ENCODE measurements at regions of chr5 and their contacts with region 1.

Region 1: GRCh38 chr5:158074992-158075769 is 216.2 kb upstream of the CLINT1 start:
- DNase-seq: peak; percentile 19
- H3K4me3 ChIP-seq: peak overlapping the region; percentile 2; the same call in 1 of the 2 replicates
- CTCF ChIP-seq: peak; percentile 79

Region 2: GRCh38 chr5:158054223-158055110 is 20.7 kb before region 1 on chr5:
- CTCF ChIA-PET with region 1: interaction called, 72 read pairs
- POLR2A ChIA-PET with region 1: no interaction called
- DNase-seq: no peak
- H3K4me3 ChIP-seq: no peak overlapping the region
- CTCF ChIP-seq: no peak

Region 3: GRCh38 chr5:158064334-158065123 is 10.7 kb before region 1 on chr5:
- CTCF ChIA-PET with region 1: interaction called, 72 read pairs
- POLR2A ChIA-PET with region 1: no interaction called
- DNase-seq: no peak
- H3K4me3 ChIP-seq: no peak overlapping the region
- CTCF ChIP-seq: no peak

Region 4: GRCh38 chr5:158100373-158100888 is 25.2 kb after region 1 on chr5:
- CTCF ChIA-PET with region 1: interaction called, 11 read pairs
- POLR2A ChIA-PET with region 1: no interaction called
- DNase-seq: no peak
- H3K4me3 ChIP-seq: no peak overlapping the region
- CTCF ChIP-seq: no peak

Region 5: DNA sequence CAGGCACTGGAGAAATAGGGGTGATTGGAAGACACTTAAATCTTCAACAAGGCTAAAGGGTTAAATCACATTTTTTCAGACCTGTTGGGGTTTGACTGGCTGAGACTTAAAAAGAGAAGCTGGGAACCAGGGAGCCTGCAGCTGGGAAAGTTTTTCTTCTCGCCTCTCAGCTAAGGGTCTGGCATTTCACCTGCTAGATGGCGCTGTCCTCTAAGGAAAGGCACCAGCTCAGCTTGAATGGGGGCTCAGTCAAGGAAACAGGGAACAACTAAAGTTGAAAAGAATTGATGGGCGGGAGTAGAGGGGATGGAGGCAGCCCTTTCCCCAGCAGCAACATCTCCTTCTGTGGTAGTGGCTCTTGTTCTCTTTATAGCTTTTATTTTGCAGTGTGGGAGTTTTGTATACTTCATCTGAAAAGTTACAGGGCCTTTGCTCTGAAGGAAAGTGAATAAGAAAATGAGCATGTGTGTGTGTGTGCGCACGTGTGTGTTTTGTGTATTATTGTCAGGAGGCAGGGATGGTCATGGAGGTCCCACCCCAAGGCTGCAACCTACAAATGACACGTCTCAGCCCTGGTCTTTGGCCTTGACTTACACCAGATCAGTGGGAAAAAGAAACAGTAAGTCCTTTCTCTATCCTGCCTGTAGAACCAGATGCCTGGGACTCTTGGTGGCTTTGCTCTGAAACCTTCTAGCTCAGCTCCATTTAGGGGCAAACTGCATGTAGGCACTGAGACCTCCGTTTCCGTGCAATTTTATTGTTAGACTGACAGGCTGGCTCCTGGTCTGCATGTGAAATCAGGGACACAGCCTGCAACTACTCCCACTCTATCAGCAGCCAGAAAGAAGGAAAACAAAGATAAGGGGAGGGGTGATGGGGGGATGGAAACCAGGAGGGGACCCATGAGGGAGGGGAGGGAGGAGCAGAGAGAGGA is 100.0 kb after region 1 on chr5:
- CTCF ChIA-PET with region 1: interaction called, 15 read pairs
- POLR2A ChIA-PET with region 1: no interaction called
- DNase-seq: peak; percentile 28
- H3K4me3 ChIP-seq: no peak overlapping the region
- CTCF ChIP-seq: peak; percentile 81

Region 6: DNA sequence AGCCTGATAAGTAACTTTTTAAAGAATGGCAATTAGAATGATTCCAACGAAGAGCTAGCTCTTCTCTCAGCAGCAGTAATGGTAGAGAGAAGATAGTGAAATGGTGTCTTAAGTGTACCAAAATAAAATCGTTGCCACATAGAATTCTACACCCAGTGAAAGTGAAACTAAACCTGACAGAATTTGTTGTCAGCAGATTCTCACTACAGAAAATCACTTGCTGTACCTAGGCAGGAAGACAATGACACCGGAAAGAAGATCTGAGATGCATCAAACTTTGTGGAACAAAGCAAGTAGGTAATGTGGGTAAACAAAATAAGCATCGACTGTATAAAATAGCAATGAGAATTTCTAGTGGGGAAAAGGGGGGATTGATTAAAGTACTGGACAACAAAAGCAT is 1045.3 kb after region 1 on chr5:
- CTCF ChIA-PET with region 1: interaction called, 11 read pairs
- POLR2A ChIA-PET with region 1: no interaction called
- DNase-seq: no peak
- H3K4me3 ChIP-seq: no peak overlapping the region
- CTCF ChIP-seq: no peak

Region 7: GRCh38 chr5:159133041-159133741 is 1058.0 kb after region 1 on chr5:
- CTCF ChIA-PET with region 1: interaction called, 43 read pairs
- POLR2A ChIA-PET with region 1: no interaction called
- DNase-seq: peak; percentile 40
- H3K4me3 ChIP-seq: no peak overlapping the region
- CTCF ChIP-seq: peak; percentile 50

Measured in AG04449 (cell line).